WTC11 (cell line): ENCODE measurements at regions of chr15 and their contacts with region 1.

Region 1: GRCh38 chr15:45573961-45574629 is 13.1 kb upstream of the BLOC1S6 start:
- DNase-seq: peak; percentile 92
- ATAC-seq: peak; percentile 99
- H3K4me3 Mint-ChIP-seq: peak overlapping the region; percentile 22; the same call in 1 of the 2 replicates
- H3K27ac Mint-ChIP-seq: no peak overlapping the region
- H3K4me1 Mint-ChIP-seq: peaks cover 4% of the 10 kb centered on the region
- H3K27me3 Mint-ChIP-seq: peaks cover 50% of the 10 kb centered on the region
- CTCF ChIP-seq: peak; percentile 55

Region 2: GRCh38 chr15:45457641-45458433 is 116.3 kb before region 1 on chr15:
- CTCF ChIA-PET with region 1: interaction called, 25 read pairs
- POLR2A ChIA-PET with region 1: no interaction called
- DNase-seq: peak; percentile 62
- ATAC-seq: peak; percentile 81
- H3K4me3 Mint-ChIP-seq: peak overlapping the region; percentile 54
- H3K27ac Mint-ChIP-seq: peak overlapping the region; percentile 91; the same call in 1 of the 2 replicates
- H3K4me1 Mint-ChIP-seq: peaks cover 12% of the 10 kb centered on the region
- H3K27me3 Mint-ChIP-seq: peaks cover 55% of the 10 kb centered on the region
- CTCF ChIP-seq: peak; percentile 83

Region 3: DNA sequence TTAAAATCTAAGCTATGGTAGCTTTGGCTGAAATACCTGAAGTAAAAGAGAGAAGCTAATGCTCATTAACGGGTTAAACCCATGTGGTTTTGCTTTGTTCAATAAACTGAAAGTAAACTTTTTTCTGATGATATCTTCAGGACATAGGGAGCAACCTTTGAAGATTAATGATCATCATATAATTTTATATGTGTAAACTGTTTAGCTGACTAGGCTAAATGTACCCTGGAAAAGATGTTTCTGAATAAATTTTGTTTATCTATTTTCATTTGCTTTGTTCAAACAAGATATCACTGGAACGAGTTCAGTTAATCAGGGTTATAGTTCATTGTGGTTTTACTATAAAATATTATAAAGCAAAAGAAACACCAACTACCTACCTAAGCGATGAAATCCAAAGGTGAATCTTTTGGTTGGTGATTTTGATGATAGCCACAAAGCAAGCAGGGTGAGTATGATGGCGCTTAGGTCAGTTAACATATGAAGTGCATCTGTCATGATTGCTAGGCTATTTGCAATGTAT is 63.3 kb before region 1 on chr15:
- CTCF ChIA-PET with region 1: interaction called, 11 read pairs
- POLR2A ChIA-PET with region 1: no interaction called
- DNase-seq: no peak
- ATAC-seq: no peak
- H3K4me3 Mint-ChIP-seq: no peak overlapping the region
- H3K27ac Mint-ChIP-seq: no peak overlapping the region
- H3K4me1 Mint-ChIP-seq: peaks cover 4% of the 10 kb centered on the region
- H3K27me3 Mint-ChIP-seq: peaks cover 39% of the 10 kb centered on the region
- CTCF ChIP-seq: no peak

Region 4: DNA sequence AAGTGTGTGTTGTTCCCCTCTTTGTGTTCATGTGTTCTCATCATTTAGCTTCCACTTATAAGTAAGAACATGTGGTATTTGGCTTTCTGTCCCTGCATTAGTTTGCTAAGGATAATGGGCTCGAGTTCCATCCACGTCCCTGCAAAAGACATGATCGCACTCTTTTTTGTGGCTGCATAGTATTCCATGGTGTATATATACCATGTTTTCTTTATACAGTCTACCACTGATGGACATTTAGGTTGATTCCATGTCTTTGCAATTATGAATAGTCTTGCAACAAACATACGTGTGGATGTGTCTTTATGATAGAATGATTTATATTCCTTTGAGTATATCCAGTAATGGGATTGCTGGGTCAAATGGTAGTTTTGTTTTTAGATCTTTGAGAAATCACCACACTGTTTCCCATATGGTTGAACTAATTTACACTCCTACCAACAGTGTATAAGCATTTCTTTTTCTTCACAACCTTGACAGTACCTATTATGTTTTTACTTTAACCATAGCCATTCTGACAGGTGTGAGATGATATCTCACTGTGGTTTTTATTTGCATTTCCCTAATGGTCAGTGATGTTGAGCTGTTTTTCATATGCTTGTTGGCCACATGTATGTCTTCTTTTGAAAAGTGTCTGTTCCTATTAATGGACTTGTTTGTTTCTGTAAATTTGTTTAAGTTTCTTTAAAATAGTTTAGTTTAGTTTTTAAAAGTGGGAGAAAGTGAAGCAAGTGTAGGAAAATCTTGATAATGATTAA is 29.6 kb before region 1 on chr15:
- CTCF ChIA-PET with region 1: interaction called, 11 read pairs
- POLR2A ChIA-PET with region 1: no interaction called
- DNase-seq: no peak
- ATAC-seq: no peak
- H3K4me3 Mint-ChIP-seq: no peak overlapping the region
- H3K27ac Mint-ChIP-seq: no peak overlapping the region
- H3K4me1 Mint-ChIP-seq: peaks cover 6% of the 10 kb centered on the region
- H3K27me3 Mint-ChIP-seq: peaks cover 11% of the 10 kb centered on the region
- CTCF ChIP-seq: no peak

Region 5: GRCh38 chr15:45587095-45587860 is 13.2 kb after region 1 on chr15 and contains the start of gene BLOC1S6:
- CTCF ChIA-PET with region 1: interaction called, 55 read pairs
- POLR2A ChIA-PET with region 1: interaction called, 24 read pairs
- DNase-seq: peak; percentile 88
- ATAC-seq: peak; percentile 95
- H3K4me3 Mint-ChIP-seq: peak within 1 kb of the TSS; percentile 98
- H3K27ac Mint-ChIP-seq: peak within 1 kb of the TSS; percentile 100
- H3K4me1 Mint-ChIP-seq: peaks cover 19% of the 10 kb centered on the region
- H3K27me3 Mint-ChIP-seq: peaks cover 4% of the 10 kb centered on the region; the same call in 1 of the 2 replicates
- CTCF ChIP-seq: no peak
- total RNA-seq, gene BLOC1S6: 28.7 to 31.6 TPM (median 29.1 TPM) in 3 replicates

Region 6: GRCh38 chr15:45611305-45611704 is 37.2 kb after region 1 on chr15:
- CTCF ChIA-PET with region 1: interaction called, 21 read pairs
- POLR2A ChIA-PET with region 1: no interaction called
- DNase-seq: no peak
- ATAC-seq: no peak
- H3K4me3 Mint-ChIP-seq: no peak overlapping the region
- H3K27ac Mint-ChIP-seq: no peak overlapping the region
- H3K4me1 Mint-ChIP-seq: no peaks in the 10 kb centered on the region
- H3K27me3 Mint-ChIP-seq: no peaks in the 10 kb centered on the region
- CTCF ChIP-seq: no peak